ENCODE measurements at regions of chr1 and their contacts with region 1.

Region 1: DNA sequence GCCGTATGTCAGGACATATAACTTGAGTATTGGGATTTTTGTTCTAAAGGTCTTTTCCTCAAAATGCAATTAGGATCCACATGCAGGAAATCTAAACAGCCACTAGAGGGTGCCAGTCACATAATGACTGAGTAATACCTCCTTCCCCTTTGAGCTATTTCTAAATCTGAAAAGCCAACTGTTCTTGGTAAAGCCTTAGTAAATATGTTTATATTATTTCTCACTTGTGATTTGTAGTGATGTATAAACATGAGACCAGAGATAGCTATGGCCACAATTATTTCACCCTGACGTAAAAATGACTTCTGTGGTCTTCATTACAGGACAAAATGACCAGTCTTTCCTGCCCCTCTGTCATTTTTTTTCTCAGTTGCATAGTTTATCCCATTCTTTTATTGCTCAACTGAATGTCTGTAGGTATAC is 41.0 kb upstream of the DR1 start:
- DNase-seq: peak; percentile 18 to 58
- ATAC-seq: peak in 1 of 2 experiments; percentile 64; a peak in 3 of 6 replicates
- H3K4me3 ChIP-seq: no peak overlapping the region
- H3K27ac ChIP-seq: no peak overlapping the region
- H3K4me1 ChIP-seq: no peaks in the 10 kb centered on the region
- CTCF ChIP-seq: peak; percentile 82
- EP300 ChIP-seq: no peak
- POLR2A ChIP-seq: no peak
- RAD21 ChIP-seq: peak; percentile 80 to 88

Region 2: GRCh38 chr1:93244298-93245069 is 60.2 kb before region 1 on chr1:
- CTCF ChIA-PET with region 1: no interaction called
- POLR2A ChIA-PET with region 1: no interaction called
- DNase-seq: no peak
- ATAC-seq: no peak
- H3K4me3 ChIP-seq: no peak overlapping the region
- H3K27ac ChIP-seq: no peak overlapping the region
- H3K4me1 ChIP-seq: no peaks in the 10 kb centered on the region
- CTCF ChIP-seq: no peak
- EP300 ChIP-seq: no peak
- POLR2A ChIP-seq: no peak
- RAD21 ChIP-seq: no peak

Region 3: GRCh38 chr1:93288558-93288957 is 16.2 kb before region 1 on chr1:
- CTCF ChIA-PET with region 1: interaction called, 18 read pairs
- POLR2A ChIA-PET with region 1: no interaction called
- DNase-seq: no peak
- ATAC-seq: no peak
- H3K4me3 ChIP-seq: no peak overlapping the region
- H3K27ac ChIP-seq: no peak overlapping the region
- H3K4me1 ChIP-seq: no peaks in the 10 kb centered on the region
- CTCF ChIP-seq: no peak
- EP300 ChIP-seq: no peak
- POLR2A ChIP-seq: no peak
- RAD21 ChIP-seq: no peak

Region 4: DNA sequence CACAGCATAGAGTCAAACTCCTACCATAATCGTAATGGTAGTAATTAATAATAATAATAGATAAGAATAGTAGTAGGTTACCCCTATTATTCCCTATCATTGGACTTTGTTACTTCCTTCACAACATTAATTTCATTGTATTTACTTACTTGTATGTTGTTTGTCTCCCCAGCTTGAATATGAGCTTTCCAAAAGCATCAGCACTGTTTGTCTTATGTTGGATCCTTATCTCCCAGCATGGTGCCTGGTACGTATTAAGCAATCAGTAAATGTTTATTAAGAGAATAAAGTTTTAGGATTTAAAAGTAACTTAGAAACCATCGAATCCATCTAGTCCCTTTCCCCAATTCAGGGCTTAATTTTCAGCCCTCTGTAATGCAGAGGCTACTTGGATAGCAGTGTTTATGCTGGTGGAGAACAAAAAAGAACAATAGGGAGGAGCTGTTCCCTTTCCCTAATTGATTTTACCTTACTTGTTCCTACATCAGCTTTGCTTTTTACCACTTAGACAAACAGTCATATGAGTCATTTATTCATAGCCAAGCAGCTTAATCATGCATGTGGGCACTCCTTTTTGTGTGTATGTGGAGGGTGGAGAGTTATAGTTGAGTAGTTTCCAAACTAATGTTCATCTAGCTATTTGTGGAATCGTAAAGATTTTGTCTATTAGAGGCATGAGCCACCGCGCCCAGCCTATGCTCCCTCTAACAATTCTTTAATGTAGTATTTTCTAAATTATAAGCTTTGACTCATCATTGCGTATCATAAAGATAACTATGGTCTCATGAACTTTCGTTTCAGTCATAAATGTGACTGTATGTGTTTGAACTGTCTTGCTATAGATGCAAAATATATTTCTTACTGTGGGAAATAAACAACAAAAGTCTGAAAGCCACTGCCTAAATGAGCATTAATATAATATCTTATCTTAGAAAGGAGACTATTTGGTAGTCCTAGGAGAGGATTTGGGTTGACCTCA is 20.0 kb after region 1 on chr1:
- CTCF ChIA-PET with region 1: interaction called, 20 read pairs
- POLR2A ChIA-PET with region 1: no interaction called
- DNase-seq: peak; percentile 50 to 54
- ATAC-seq: peak; percentile 76 to 89; a peak in 5 of 6 replicates
- H3K4me3 ChIP-seq: no peak overlapping the region
- H3K27ac ChIP-seq: peak overlapping the region; percentile 53 to 66
- H3K4me1 ChIP-seq: peaks cover 22% of the 10 kb centered on the region
- CTCF ChIP-seq: no peak
- EP300 ChIP-seq: no peak
- POLR2A ChIP-seq: no peak
- RAD21 ChIP-seq: no peak

Region 5: GRCh38 chr1:93345633-93346420 is 41.1 kb after region 1 on chr1 and contains the start of gene DR1:
- CTCF ChIA-PET with region 1: interaction called, 11 read pairs
- POLR2A ChIA-PET with region 1: interaction called, 10 read pairs
- DNase-seq: peak; percentile 80 to 88
- ATAC-seq: peak; percentile 92 to 95
- H3K4me3 ChIP-seq: peak within 1 kb of the TSS; percentile 86
- H3K27ac ChIP-seq: peak within 1 kb of the TSS; percentile 98 to 99
- H3K4me1 ChIP-seq: peaks cover 28% of the 10 kb centered on the region; the same call in 2 of the 3 replicates
- CTCF ChIP-seq: no peak
- EP300 ChIP-seq: no peak
- POLR2A ChIP-seq: peak; percentile 61
- RAD21 ChIP-seq: no peak
- polyA plus RNA-seq, gene DR1: 30.8 and 39.8 TPM in 2 replicates

Region 6: DNA sequence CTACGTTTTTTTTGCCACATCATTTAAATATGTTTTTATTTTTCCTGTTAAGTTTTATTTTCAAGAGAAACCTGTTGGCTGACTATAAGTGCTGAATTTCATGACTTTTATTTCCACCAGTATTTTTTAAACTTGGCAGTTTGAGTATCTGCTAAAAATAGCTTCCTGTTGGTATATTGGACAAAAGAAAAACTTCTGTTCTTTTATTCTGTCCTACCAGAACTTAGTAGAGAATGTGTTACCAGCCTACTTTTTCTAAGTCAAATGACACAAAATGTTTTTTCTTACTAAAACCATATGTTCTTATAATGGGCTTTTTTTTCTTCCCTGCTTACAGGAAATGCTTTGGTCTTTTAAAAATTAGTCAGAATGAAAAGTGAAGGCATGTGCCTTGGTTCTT is 48.6 kb after region 1 on chr1:
- CTCF ChIA-PET with region 1: interaction called, 10 read pairs
- POLR2A ChIA-PET with region 1: no interaction called
- DNase-seq: no peak
- ATAC-seq: no peak
- H3K4me3 ChIP-seq: no peak overlapping the region
- H3K27ac ChIP-seq: no peak overlapping the region
- H3K4me1 ChIP-seq: peaks cover 26% of the 10 kb centered on the region; the same call in 2 of the 3 replicates
- CTCF ChIP-seq: no peak
- EP300 ChIP-seq: no peak
- POLR2A ChIP-seq: no peak
- RAD21 ChIP-seq: no peak